Heart right ventricle (tissue), 16 donors: ENCODE measurements at regions of chr13 and their contacts with region 1.

Region 1: DNA sequence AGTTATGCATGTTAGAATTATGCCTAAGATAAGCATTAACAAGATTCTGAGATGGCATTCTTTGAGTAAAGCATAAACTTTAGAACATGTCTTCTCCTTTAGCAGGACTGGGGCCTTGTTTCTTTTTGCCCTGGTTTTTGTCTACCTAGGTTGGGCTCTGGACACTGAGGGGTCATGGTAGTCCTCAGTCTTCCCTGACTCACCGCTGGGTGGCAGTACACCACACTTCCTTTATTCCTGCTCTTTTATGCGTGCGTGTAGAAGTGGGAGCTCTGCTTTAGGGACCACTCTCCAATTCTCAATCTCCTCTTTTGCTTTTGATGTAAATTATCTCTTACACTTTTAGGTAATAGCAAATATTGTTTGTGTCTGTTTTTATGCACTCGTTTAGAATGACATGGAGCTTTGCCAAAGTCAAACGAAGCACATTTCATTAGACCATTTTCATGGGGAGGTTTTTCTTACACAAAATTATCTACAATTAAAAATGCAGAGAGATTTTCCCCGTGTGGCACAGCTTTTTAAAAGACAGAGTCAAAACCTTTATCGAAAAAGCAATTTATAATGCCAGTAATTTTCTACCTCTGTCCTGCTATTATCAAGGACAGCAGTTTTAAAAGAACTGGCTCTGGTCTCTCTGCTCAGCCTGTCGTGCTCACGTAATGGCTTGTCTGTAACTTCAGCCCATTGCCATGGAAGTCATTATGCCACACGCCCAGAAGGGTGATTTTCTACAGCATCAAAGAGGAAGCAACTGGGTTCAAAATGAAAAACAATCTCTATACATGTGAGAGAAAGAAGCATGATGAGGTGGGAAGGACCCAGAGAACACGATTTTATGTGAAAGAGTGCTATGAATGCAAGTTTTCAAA is 413.9 kb downstream of the COG6 start:
- DNase-seq: peak; percentile 78 to 83
- ATAC-seq: peak; percentile 90 to 96 (median 92)
- H3K4me3 ChIP-seq: peak overlapping the region in 4 of 10 donors; percentile 3 to 25 (median 15)
- H3K27ac ChIP-seq: peak overlapping the region in 2 of 10 donors; percentile 3 to 4
- H3K4me1 ChIP-seq: peaks cover 0 to 17% (median 7%) of the 10 kb centered on the region in 9 donors
- H3K27me3 ChIP-seq: no peaks in the 10 kb centered on the region
- CTCF ChIP-seq: peak; percentile 68 to 94 (median 88)

Region 2: DNA sequence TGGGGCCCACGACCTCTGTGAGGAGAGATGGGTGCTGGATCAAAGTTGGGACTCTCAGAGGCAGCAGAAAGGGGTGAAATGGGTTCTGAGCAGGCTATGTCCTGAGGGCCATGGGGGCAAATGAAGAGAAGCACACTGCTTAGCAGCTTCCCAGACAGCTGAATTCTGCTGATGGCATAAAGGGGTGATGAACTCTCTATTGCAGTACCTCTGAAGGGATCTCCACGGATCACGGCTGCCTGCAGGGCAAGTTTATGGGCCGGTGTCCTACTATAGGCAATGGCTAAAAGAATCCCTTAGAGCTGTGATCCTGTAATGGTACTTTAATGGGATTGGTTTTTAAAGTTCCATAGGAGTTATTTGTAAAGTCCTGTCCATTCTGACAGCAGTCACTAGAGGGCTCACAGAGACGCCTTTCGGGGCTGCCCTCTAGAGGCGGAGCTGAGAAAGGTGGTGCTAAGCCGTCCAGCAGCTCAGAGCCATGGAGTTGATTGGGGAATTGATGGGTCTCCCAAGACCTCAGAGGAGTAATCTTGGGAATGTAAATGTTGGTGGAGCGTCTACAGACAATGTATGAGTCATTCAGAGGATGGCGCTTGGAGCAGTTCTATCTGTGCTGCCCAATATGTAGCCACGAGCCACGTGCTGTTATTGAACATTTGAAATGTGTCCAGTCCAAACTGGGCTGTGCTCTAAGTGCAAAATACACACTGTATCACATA is 126.7 kb before region 1 on chr13:
- intact Hi-C with region 1: loop called in 1 of 10 experiments (anchors 10 kb)
- DNase-seq: peak; percentile 61 to 62
- ATAC-seq: peak; percentile 86 to 93 (median 90)
- H3K4me3 ChIP-seq: no peak overlapping the region
- H3K27ac ChIP-seq: peak overlapping the region in 2 of 10 donors; percentile 8 to 12
- H3K4me1 ChIP-seq: peaks cover 0 to 13% (median 0%) of the 10 kb centered on the region in 9 donors
- H3K27me3 ChIP-seq: no peaks in the 10 kb centered on the region
- CTCF ChIP-seq: peak; percentile 78 to 98 (median 88)

Region 3: DNA sequence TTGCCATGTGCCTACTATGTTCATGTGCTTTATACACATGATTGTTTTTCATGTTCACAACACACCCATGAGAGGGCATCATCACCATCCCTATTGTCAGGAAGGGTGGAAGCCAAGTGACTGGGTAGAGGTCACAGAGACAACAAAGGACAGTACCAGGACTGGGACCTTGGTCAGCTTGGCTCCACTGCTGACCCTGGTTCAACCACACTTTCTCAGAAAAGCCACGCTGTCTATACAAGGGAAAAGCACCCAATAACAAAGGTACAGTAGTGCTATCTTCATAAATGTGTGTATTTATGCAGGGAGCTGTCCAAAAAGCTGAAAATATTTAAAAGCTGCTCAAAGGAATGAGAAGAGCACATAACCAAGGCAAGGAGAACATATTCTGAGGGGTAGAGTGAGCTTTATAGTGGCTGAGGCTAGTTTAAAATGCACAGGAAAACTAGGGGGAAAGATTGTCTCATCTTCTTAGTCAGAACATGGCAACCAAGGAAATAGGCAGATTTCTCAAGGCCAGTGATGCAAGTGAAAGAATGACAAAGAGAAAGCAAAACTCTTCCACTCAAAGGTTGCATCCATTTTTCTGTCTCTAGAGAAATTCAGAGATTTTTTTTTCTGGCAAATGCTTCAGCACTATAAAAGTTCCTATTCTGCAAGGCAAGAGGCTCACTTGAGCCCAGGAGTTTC is 182.1 kb after region 1 on chr13:
- intact Hi-C with region 1: loop called in 1 of 10 experiments (anchors 10 kb)
- DNase-seq: no peak
- ATAC-seq: peak in 3 of 8 donors; percentile 30 to 56 (median 53)
- H3K4me3 ChIP-seq: no peak overlapping the region
- H3K27ac ChIP-seq: peak overlapping the region in 4 of 10 donors; percentile 6 to 47 (median 22)
- H3K4me1 ChIP-seq: peaks cover 0 to 26% (median 7%) of the 10 kb centered on the region in 9 donors
- H3K27me3 ChIP-seq: no peaks in the 10 kb centered on the region
- CTCF ChIP-seq: peak in 2 of 9 donors; percentile 4 to 11

Region 4: GRCh38 chr13:40401911-40402776 is 332.7 kb after region 1 on chr13:
- intact Hi-C with region 1: loop called in 1 of 10 experiments (anchors 10 kb)
- DNase-seq: peak; percentile 95
- ATAC-seq: peak; percentile 95 to 98 (median 96)
- H3K4me3 ChIP-seq: peak overlapping the region in 5 of 10 donors; percentile 2 to 23 (median 16)
- H3K27ac ChIP-seq: peak overlapping the region in 9 of 10 donors; percentile 40 to 87 (median 66)
- H3K4me1 ChIP-seq: peaks cover 2 to 43% (median 34%) of the 10 kb centered on the region in 9 donors
- H3K27me3 ChIP-seq: no peaks in the 10 kb centered on the region
- CTCF ChIP-seq: no peak

Region 5: DNA sequence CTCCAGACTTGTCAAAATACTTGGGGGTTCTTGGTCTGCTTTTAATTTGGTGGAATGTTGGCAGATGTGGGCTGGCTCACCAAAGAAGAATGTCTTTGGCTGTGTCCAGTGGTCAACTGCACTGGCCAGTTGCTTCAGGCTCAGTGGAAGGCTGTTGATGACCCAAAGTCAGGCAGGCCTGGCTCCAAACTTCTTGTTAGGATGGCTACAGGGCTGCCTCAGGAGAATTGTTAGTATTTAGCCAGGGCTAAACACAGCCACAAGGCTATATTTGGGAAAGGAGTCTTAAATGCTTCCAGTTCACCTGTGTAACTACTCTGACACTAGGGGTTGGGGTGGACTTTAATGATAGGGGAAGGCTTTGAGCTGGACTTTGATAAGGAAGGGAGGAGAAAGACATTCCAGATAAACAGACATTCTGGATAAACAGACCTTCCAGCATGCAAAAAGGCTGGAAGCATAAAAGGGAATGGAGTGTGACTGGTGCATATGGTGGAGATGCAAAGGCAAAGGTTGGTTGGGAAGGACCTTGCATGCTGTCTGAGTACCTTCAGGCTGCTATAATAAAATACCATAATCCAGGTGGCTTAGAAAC is 480.2 kb after region 1 on chr13:
- intact Hi-C with region 1: loop called in 1 of 10 experiments (anchors 10 kb)
- DNase-seq: no peak
- ATAC-seq: peak in 3 of 8 donors; percentile 36 to 59 (median 48)
- H3K4me3 ChIP-seq: no peak overlapping the region
- H3K27ac ChIP-seq: peak overlapping the region in 1 of 10 donors; percentile 23
- H3K4me1 ChIP-seq: peaks cover 0 to 23% (median 8%) of the 10 kb centered on the region in 9 donors
- H3K27me3 ChIP-seq: no peaks in the 10 kb centered on the region
- CTCF ChIP-seq: no peak